Dorsolateral prefrontal cortex (tissue), 120 donors: ENCODE measurements at regions of chr17 and their contacts with region 1.

Region 1: DNA sequence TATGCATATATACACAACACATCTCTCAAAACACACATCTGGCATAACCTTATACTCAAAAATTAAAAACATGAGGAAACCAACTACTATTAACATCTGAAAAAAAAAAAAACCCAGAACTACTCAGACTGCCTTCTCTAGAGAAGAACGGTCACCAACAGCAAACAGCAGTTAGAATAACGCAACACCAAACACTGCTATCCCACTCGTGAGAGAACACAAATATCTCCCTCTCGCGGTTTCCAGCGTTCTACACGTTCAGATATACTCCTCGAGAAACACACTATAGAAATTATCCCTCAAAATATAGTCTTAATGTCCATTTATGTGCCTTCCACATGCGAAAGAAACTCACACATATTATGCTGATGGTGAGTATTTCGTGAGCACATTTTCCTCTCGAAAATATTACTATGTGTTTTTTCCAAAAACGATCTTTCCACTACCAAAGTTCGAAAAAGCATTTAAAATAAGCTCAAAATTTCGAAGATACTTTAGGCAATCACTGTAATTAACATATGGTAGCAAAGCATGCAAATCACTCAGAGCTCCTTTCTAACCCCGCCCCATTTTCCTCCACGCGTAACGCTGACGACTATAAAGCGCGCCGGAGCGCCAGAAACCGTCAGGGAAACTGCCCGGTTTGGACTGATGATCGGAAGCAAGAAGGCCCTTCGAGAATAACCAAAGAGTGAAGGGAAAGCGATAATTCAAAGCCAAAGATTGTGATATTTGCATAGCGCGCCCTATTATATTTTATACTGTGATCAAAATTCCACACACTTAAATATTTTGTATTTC is 60.1 kb downstream of the TEX14 start:
- DNase-seq: peak; percentile 93 to 98 (median 96)
- H3K4me3 ChIP-seq: peak overlapping the region; percentile 21 to 70 (median 53)
- H3K27ac ChIP-seq: peak overlapping the region; percentile 69 to 98 (median 92)
- H3K27me3 ChIP-seq: no peaks in the 10 kb centered on the region
- CTCF ChIP-seq: peak in 49 of 56 donors; percentile 3 to 63 (median 44)

Region 2: GRCh38 chr17:58531661-58532554 is 99.8 kb before region 1 on chr17:
- intact Hi-C with region 1: loop called in 1 of 2 experiments (anchors 5 kb)
- DNase-seq: peak; percentile 67 to 91 (median 81)
- H3K4me3 ChIP-seq: peak overlapping the region; percentile 64 to 93 (median 81)
- H3K27ac ChIP-seq: peak overlapping the region; percentile 85 to 100 (median 99)
- H3K27me3 ChIP-seq: no peaks in the 10 kb centered on the region
- CTCF ChIP-seq: peak in 2 of 56 donors; percentile 11 to 16

Region 3: GRCh38 chr17:58556833-58557250 is 74.9 kb before region 1 on chr17:
- intact Hi-C with region 1: loop called in 1 of 2 experiments (anchors 2 kb)
- DNase-seq: peak in 1 of 10 donors; percentile 39
- H3K4me3 ChIP-seq: peak overlapping the region in 6 of 59 donors; percentile 2 to 27 (median 12)
- H3K27ac ChIP-seq: peak overlapping the region; percentile 57 to 96 (median 86)
- H3K27me3 ChIP-seq: no peaks in the 10 kb centered on the region
- CTCF ChIP-seq: no peak

Region 4: DNA sequence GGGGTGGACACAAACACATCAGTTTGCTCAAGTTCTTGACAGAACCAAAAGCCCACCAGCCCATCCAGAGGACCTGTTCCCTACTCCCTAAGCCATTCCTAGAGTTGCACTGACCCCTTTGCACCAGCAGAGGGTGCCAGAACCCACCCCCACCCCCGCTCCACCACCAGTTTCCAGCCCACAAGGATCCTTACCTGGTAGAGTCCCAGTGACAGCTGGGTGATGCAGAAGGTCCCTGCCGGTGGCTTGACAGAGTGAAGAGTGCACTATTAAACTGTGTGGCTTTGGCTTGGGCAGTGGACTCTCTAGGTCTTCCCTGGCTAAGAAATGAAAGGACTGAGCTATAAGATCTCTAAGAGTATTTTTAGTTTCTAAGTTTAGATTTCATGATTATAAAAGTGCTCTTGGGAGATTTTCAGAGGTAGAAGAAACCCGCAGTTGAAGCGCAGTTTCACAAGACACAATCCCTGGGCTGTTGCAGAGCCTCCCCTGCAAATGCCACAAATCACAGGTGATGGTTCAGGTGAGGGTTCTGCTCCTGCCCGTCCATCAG is 43.9 kb before region 1 on chr17:
- intact Hi-C with region 1: loop called in 1 of 2 experiments (anchors 2 kb)
- DNase-seq: peak in 9 of 10 donors; percentile 21 to 62 (median 45)
- H3K4me3 ChIP-seq: peak overlapping the region in 1 of 59 donors; percentile 17
- H3K27ac ChIP-seq: peak overlapping the region in 32 of 59 donors; percentile 6 to 79 (median 52)
- H3K27me3 ChIP-seq: no peaks in the 10 kb centered on the region
- CTCF ChIP-seq: peak; percentile 63 to 96 (median 88)

Region 5: DNA sequence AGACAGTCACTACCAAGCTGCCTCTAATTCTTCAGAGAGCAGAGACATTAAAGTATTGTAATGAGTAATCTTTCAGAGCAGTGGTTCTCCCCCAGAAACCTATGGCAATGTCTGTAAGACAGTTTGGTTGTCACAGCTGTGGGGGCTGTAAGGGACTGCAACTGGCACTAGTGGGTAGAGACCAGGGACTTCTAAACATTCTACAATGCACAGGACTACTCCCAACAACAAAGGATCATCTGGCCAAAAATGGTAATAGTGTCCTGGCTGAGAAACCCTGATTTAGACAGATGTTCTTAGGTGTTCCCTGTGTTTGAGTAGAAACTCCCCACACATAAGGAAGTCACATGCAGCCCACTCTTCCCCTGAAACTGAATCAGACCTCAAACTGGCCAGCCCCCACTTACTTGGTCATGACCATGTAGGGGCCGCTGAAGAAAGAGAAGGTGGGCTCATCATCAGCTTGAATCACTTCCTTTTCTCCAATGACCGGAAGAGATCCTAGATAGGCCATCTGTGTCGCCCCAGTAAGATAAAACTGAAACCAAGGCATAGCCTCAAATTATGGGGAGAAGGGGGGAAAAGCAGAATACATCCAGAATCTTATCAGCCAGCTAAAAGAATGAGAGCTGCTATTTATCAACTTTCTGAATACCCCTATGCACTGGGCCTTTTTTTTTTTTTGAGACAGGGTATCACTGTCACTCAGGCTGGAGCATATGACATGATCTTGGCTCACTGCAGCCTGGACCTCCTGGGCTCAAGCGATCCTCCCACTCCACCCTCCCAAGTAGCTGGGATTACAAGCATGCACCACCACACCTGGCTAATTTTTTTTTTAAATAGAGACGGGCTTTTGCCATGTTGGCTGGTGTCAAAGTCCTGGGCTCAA is 15.7 kb before region 1 on chr17:
- intact Hi-C with region 1: no loop called
- DNase-seq: no peak
- H3K4me3 ChIP-seq: no peak overlapping the region
- H3K27ac ChIP-seq: no peak overlapping the region
- H3K27me3 ChIP-seq: no peaks in the 10 kb centered on the region
- CTCF ChIP-seq: no peak

Region 6: GRCh38 chr17:58658804-58659713 is 27.3 kb after region 1 on chr17:
- intact Hi-C with region 1: loop called in 1 of 2 experiments (anchors 1 kb)
- DNase-seq: peak in 9 of 10 donors; percentile 52 to 83 (median 59)
- H3K4me3 ChIP-seq: peak overlapping the region; percentile 26 to 77 (median 56)
- H3K27ac ChIP-seq: peak overlapping the region; percentile 44 to 99 (median 90)
- H3K27me3 ChIP-seq: no peaks in the 10 kb centered on the region
- CTCF ChIP-seq: peak in 23 of 56 donors; percentile 7 to 49 (median 29)

Region 7: DNA sequence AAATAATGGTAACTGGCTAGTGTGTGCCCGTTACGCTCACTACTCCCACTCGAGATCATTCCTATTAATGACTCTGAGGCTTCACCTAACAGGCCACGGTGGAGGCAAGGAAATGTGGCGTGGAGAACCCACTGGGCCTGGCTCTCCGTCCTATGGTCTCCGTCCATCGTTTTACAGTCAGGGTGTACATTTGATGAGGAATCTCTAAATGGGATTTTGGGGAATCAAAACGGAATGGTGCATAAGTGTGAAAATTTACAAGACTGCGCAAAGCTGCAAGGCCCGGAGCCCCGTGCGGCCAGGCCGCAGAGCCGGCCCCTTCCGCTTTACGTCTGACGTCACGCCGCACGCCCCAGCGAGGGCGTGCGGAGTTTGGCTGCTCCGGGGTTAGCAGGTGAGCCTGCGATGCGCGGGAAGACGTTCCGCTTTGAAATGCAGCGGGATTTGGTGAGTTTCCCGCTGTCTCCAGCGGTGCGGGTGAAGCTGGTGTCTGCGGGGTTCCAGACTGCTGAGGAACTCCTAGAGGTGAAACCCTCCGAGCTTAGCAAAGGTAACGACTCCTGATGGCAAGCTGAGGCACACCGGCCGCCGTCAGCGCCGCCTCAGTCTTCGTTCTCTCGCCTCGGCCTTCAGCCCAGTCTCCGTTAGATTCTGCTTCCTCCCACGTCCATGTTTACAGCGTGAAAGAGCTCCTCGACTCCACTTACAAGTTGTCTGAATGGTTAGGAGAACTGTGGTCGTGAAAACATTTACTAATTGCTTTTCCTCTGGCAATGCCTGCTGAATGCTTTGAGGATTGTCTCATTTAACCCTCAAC is 60.7 kb after region 1 on chr17 and contains the start of gene RAD51C:
- intact Hi-C with region 1: loop called in 1 of 2 experiments (anchors 2 kb)
- DNase-seq: peak; percentile 67 to 91 (median 84)
- H3K4me3 ChIP-seq: peak within 1 kb of the TSS; percentile 43 to 98 (median 82)
- H3K27ac ChIP-seq: peak within 1 kb of the TSS; percentile 47 to 96 (median 88)
- H3K27me3 ChIP-seq: no peaks in the 10 kb centered on the region
- CTCF ChIP-seq: peak in 26 of 56 donors; percentile 9 to 51 (median 24)
- total RNA-seq, gene RAD51C: 28.3 to 69.2 (median 44.4) TPM

Region 8: DNA sequence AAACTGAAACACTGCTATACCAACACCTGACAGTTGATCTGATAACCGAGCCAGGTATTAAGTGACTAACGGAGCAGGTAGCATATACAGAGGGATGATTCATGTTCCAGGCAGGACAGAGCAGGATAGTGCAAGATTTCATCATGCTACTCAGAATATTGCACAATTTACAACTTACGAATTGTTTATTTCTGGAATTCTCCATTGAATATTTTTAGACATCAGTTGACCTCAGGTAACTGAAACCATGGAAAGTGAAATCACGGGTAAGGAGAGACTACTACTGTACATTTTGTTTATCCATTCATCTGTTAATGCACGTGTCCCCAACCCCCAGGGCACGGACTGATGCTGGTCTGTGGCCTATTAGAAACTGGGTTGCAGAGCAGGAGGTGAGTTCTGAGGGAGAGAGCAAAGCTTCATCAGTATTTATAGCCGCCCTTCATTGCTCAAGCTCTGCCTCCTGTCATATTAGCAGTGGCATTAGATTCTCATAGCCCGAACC is 109.5 kb after region 1 on chr17:
- intact Hi-C with region 1: no loop called
- DNase-seq: no peak
- H3K4me3 ChIP-seq: no peak overlapping the region
- H3K27ac ChIP-seq: no peak overlapping the region
- H3K27me3 ChIP-seq: no peaks in the 10 kb centered on the region
- CTCF ChIP-seq: no peak